Vagina (tissue), 2 donors: ENCODE measurements at regions of chr17 and their contacts with region 1.

Region 1: DNA sequence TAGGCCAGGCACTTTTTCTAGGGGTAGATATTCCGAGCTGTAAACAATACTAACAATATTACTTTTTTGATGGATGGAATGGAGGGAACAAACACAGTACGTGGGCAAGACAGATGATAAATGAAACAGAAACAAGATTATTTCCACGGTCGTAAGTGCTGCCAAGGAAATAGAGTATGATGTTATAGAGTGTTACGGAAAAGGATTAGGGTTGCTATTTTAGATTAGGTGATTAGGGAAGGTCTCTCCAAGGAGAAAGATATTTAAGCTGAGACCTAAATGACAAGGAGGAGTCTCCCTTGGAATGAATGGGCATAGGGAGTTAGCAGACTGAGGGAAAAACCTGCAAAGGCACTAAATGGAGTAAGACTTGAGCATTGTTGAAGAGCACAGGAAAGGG is 8.3 kb downstream of the ADPRM start:
- DNase-seq: no peak
- H3K4me3 ChIP-seq: no peak overlapping the region
- H3K27ac ChIP-seq: no peak overlapping the region
- H3K4me1 ChIP-seq: peaks cover 5% of the 10 kb centered on the region
- H3K27me3 ChIP-seq: no peaks in the 10 kb centered on the region
- CTCF ChIP-seq: no peak
- POLR2A ChIP-seq: no peak

Region 2: GRCh38 chr17:11318207-11318606 is 612.5 kb after region 1 on chr17:
- intact Hi-C with region 1: loop called (anchors 5 kb)
- DNase-seq: peak in 1 of 2 donors; percentile 46
- H3K4me3 ChIP-seq: no peak overlapping the region
- H3K27ac ChIP-seq: no peak overlapping the region
- H3K4me1 ChIP-seq: no peaks in the 10 kb centered on the region
- H3K27me3 ChIP-seq: no peaks in the 10 kb centered on the region
- CTCF ChIP-seq: no peak
- POLR2A ChIP-seq: no peak